ENCODE measurements at regions of chr15 and their contacts with region 1.

Region 1: GRCh38 chr15:75903331-75904239 is at the start of gene FBXO22:
- DNase-seq: peak; percentile 98
- H3K4me3 Mint-ChIP-seq: peak within 1 kb of the TSS; percentile 98
- H3K27ac Mint-ChIP-seq: peak within 1 kb of the TSS; percentile 95
- H3K4me1 Mint-ChIP-seq: peaks cover 40% of the 10 kb centered on the region
- H3K27me3 Mint-ChIP-seq: no peaks in the 10 kb centered on the region
- total RNA-seq, gene FBXO22: 51.7 and 51.9 TPM in 2 replicates

Region 2: GRCh38 chr15:75843802-75844581 is 59.6 kb before region 1 on chr15:
- intact Hi-C with region 1: loop called (anchors 2 kb)
- DNase-seq: peak; percentile 88
- H3K4me3 Mint-ChIP-seq: peak overlapping the region; percentile 92
- H3K27ac Mint-ChIP-seq: peak overlapping the region; percentile 92
- H3K4me1 Mint-ChIP-seq: peaks cover 38% of the 10 kb centered on the region
- H3K27me3 Mint-ChIP-seq: peaks cover 18% of the 10 kb centered on the region

Region 3: GRCh38 chr15:75884041-75884440 is 19.5 kb before region 1 on chr15:
- intact Hi-C with region 1: no loop called
- DNase-seq: no peak
- H3K4me3 Mint-ChIP-seq: no peak overlapping the region
- H3K27ac Mint-ChIP-seq: no peak overlapping the region
- H3K4me1 Mint-ChIP-seq: peaks cover 5% of the 10 kb centered on the region
- H3K27me3 Mint-ChIP-seq: no peaks in the 10 kb centered on the region

Measured in activated CD4-positive, alpha-beta T cell treated with anti-CD3 and anti-CD28 coated beads, Interleukin-2, amount 10 ng/mL, durations not matched to agents 24 days and 14 days (primary cell).